Calu3 (cell line): ENCODE measurements at regions of chr3 and their contacts with region 1.

Region 1: GRCh38 chr3:191412759-191413158 is 48.2 kb upstream of the PYDC2 start:
- DNase-seq: no peak
- H3K4me3 Mint-ChIP-seq: no peak overlapping the region
- H3K27ac Mint-ChIP-seq: no peak overlapping the region
- H3K4me1 Mint-ChIP-seq: peaks cover 8% of the 10 kb centered on the region
- H3K27me3 Mint-ChIP-seq: no peaks in the 10 kb centered on the region
- CTCF ChIP-seq: no peak

Region 2: GRCh38 chr3:190739641-190740185 is 673.0 kb before region 1 on chr3:
- CTCF ChIA-PET with region 1: no interaction called
- intact Hi-C with region 1: no loop called
- DNase-seq: no peak
- H3K4me3 Mint-ChIP-seq: no peak overlapping the region
- H3K27ac Mint-ChIP-seq: no peak overlapping the region
- H3K4me1 Mint-ChIP-seq: no peaks in the 10 kb centered on the region
- H3K27me3 Mint-ChIP-seq: no peaks in the 10 kb centered on the region
- CTCF ChIP-seq: no peak

Region 3: DNA sequence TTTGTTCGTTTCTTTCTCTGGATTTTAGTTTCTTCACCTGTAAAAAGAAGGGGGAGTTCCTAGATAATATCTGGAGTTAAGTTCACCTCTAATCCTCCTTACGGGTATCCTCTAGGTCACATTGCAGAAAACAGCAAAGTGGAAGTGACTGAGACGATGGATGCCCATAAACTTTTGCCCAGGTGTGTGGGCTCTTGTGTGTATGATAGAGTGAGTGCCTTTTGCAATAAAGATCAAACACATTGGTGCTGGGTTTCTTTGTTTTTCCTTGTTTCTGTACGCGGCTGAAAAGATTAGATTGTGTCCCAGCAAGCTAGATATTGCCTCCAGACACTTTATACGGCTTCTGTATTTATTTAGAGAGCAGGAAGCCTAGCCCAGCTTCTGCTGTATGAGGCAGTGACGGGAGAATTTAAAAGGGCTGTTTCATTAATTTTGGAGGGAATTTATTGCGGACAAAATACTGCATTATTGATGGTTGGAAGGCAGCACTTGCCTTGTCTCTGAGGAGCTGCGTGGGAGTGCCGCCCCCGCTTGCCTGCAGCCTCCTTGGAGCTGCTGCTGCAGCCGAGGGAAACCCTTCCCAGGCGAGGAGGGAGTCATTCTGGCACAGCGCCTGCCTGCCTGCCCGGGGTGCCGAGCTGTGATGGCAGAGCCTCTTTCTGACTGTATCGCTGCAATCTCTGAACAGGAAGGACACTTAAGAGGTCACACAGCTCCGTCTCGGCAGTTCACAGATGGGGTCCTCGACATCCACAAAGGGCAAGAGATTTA is 86.7 kb after region 1 on chr3:
- CTCF ChIA-PET with region 1: interaction called, 3 read pairs
- intact Hi-C with region 1: loop called (anchors 1 kb)
- DNase-seq: peak; percentile 76
- H3K4me3 Mint-ChIP-seq: peak overlapping the region; percentile 76
- H3K27ac Mint-ChIP-seq: peak overlapping the region; percentile 68
- H3K4me1 Mint-ChIP-seq: peaks cover 16% of the 10 kb centered on the region
- H3K27me3 Mint-ChIP-seq: no peaks in the 10 kb centered on the region
- CTCF ChIP-seq: no peak

Region 4: GRCh38 chr3:191566469-191566868 is 153.7 kb after region 1 on chr3:
- CTCF ChIA-PET with region 1: no interaction called
- intact Hi-C with region 1: loop called (anchors 2 kb)
- DNase-seq: no peak
- H3K4me3 Mint-ChIP-seq: no peak overlapping the region
- H3K27ac Mint-ChIP-seq: no peak overlapping the region
- H3K4me1 Mint-ChIP-seq: peaks cover 12% of the 10 kb centered on the region
- H3K27me3 Mint-ChIP-seq: no peaks in the 10 kb centered on the region
- CTCF ChIP-seq: no peak

Region 5: GRCh38 chr3:191695131-191695814 is 282.5 kb after region 1 on chr3:
- CTCF ChIA-PET with region 1: no interaction called
- intact Hi-C with region 1: loop called (anchors 5 kb)
- DNase-seq: no peak
- H3K4me3 Mint-ChIP-seq: no peak overlapping the region
- H3K27ac Mint-ChIP-seq: no peak overlapping the region
- H3K4me1 Mint-ChIP-seq: peaks cover 19% of the 10 kb centered on the region
- H3K27me3 Mint-ChIP-seq: no peaks in the 10 kb centered on the region
- CTCF ChIP-seq: no peak

Region 6: DNA sequence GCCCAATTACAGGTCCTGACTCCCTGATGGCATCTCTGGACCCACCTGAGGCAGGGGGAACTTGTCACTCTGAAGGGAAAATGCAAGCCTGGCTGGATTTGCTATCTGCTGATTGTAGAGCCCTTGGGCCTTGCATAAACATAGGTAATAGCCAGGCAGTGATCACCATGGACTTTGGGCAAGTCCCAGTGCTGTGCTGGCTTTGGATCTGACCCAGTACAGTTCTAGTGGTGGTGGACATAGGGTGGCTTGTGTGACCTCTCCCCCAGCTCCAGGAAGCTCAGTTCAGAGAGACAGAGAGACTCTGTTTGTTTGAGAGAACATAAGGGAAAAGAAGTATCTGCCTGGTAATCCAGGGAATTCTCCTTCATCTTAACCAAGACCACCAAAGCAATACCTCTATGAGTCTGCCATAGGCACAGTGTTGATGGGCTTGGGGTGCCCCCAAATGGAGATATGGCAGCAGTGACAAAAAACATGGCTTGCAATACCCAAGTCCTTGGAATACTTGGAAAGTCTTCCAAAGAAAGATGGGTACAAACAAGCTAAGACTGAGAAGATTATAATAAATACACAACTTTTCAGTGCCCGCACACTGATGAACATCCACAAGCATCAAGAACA is 396.7 kb after region 1 on chr3:
- CTCF ChIA-PET with region 1: no interaction called
- intact Hi-C with region 1: loop called (anchors 1 kb)
- DNase-seq: peak; percentile 35
- H3K4me3 Mint-ChIP-seq: no peak overlapping the region
- H3K27ac Mint-ChIP-seq: no peak overlapping the region
- H3K4me1 Mint-ChIP-seq: no peaks in the 10 kb centered on the region
- H3K27me3 Mint-ChIP-seq: no peaks in the 10 kb centered on the region
- CTCF ChIP-seq: no peak

Region 7: GRCh38 chr3:192122832-192123594 is 710.3 kb after region 1 on chr3:
- CTCF ChIA-PET with region 1: no interaction called
- intact Hi-C with region 1: loop called (anchors 10 kb)
- DNase-seq: no peak
- H3K4me3 Mint-ChIP-seq: no peak overlapping the region
- H3K27ac Mint-ChIP-seq: no peak overlapping the region
- H3K4me1 Mint-ChIP-seq: no peaks in the 10 kb centered on the region
- H3K27me3 Mint-ChIP-seq: no peaks in the 10 kb centered on the region
- CTCF ChIP-seq: no peak

Region 8: DNA sequence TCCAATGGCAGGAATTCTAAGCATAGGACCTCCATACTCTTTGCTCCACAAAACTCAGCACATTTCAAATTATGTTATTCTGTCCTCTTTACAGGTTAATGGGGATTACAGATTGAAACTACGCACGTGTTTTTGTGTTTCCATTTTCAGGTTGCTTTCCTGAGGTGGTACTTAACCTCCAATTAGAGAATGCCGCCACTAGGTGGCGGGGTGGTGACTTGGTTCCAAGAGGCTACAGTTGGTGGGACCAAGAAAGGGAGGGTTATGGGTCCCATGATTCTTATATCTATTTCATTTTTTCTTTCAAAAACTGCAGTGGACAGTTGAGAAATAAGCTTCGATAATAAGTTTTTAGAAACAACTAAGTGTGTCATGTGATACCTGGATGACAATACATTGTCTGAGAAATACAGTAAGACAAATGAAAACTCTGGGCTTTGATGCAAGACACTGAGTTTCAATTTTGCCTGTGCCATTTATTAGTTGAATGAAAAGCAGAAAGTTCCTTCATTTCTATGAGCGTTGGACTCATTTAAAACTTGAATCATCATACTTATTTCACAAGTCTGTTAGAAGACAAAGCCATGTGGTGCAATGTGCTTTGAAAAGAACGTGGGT is 775.6 kb after region 1 on chr3:
- CTCF ChIA-PET with region 1: no interaction called
- intact Hi-C with region 1: loop called (anchors 10 kb)
- DNase-seq: peak; percentile 84
- H3K4me3 Mint-ChIP-seq: no peak overlapping the region
- H3K27ac Mint-ChIP-seq: no peak overlapping the region
- H3K4me1 Mint-ChIP-seq: peaks cover 15% of the 10 kb centered on the region
- H3K27me3 Mint-ChIP-seq: no peaks in the 10 kb centered on the region
- CTCF ChIP-seq: peak; percentile 94